Naive thymus-derived CD4-positive, alpha-beta T cell (primary cell): ENCODE measurements at regions of chr1 and their contacts with region 1.

Region 1: DNA sequence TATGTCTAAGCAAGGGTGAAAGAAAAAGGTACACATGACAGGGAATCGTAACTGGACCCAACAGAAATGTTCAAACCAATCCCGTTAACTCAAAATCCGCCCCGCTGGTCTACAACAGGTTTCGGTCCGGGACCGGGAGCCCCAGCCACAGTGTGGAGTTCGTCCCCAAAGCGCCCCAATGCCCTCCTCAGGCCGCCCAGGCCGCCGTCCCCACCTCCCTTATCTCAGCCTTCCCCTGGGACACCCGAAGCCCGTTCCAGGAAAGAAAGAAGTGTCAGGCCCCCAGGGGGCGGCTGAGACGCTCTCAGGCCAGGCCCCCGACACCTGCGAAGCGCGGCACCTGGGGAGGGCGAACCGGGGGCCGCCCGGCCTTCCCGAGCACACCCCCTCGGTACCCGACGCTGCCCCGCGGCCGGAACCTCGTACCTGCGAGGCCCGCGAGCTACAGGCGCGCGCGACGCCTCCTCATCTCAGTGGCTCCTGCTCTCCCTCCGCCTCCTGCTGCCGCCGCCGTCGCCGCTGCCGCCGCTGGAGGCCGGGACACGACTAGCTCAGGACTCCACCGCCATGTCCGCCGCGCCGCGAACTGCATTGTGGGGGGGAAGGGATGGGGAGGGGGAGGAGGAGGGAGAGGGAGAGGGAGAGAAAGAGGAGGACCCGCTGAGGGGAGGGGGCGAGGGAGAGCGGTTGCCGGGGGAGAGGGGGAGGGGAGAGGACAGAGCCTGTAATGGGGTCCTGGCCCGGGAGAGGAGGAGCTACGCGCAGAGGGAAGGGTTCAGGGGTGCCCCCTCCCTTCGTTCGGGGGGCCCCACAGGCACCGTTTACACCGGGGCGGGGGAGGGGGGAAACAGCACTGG is at the start of gene TUT4:
- DNase-seq: peak; percentile 57 to 77 (median 73)
- ATAC-seq: peak; percentile 57
- H3K4me3 ChIP-seq: peak within 1 kb of the TSS; percentile 95
- H3K4me3 Mint-ChIP-seq: peak within 1 kb of the TSS in 8 of 10 donors; percentile 67 to 88 (median 75)
- H3K27ac ChIP-seq: peak within 1 kb of the TSS; percentile 91
- H3K27ac Mint-ChIP-seq: peak within 1 kb of the TSS in 7 of 9 donors; percentile 55 to 94 (median 87)
- H3K4me1 ChIP-seq: peaks cover 0 to 40% of the 10 kb centered on the region in 2 donors
- H3K4me1 Mint-ChIP-seq: peaks cover 23 to 52% (median 43%) of the 10 kb centered on the region in 7 donors
- H3K27me3 ChIP-seq: no peaks in the 10 kb centered on the region
- H3K27me3 Mint-ChIP-seq: peaks cover 0 to 7% (median 0%) of the 10 kb centered on the region in 5 donors
- total RNA-seq, gene TUT4: 80.4 to 169 (median 139) TPM

Region 2: DNA sequence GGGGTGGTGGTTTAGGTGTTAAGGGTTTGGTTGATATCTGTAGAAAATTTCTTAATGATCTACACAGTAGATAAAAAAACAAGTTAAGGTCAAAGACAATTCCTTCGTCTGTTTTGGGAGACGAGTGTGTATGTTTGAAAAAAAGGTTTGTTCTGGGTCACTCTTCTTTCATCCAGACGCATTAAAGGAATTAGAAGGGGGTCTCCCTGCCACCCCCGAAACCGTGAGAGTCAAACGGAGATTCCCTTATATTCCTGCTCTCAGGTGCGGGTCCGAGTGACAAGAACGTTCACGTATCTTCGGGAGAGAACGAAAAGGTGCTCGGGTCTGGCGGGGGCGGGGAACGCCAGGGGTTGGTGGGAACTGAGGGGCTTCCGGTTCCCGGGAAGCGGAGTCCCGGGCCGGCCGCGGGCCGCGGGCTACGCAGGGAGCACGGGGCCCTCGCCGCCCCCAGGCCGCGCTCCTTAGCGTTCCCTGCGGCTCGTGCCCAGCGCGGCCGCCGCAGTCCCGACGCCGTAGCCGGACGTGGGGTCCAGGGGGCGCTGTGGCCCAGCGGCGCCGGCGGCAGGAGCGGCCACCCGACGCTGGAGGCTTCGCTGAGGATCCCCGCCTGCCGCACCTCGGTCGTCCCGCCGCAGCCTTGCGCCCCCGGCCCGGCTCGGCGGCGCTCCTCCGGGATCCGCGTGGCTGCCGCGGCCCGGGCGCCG is 411.1 kb before region 1 on chr1 and contains the start of gene ZFYVE9:
- CTCF ChIA-PET with region 1: no interaction called
- POLR2A ChIA-PET with region 1: no interaction called
- intact Hi-C with region 1: loop called in 1 of 2 experiments (anchors 5 kb)
- DNase-seq: peak; percentile 52 to 80 (median 73)
- ATAC-seq: peak; percentile 93
- H3K4me3 ChIP-seq: peak within 1 kb of the TSS; percentile 65
- H3K4me3 Mint-ChIP-seq: peak within 1 kb of the TSS; percentile 79 to 96 (median 92)
- H3K27ac ChIP-seq: peak within 1 kb of the TSS; percentile 72
- H3K27ac Mint-ChIP-seq: peak within 1 kb of the TSS; percentile 64 to 95 (median 86)
- H3K4me1 ChIP-seq: peaks cover 11 to 24% of the 10 kb centered on the region in 2 donors
- H3K4me1 Mint-ChIP-seq: peaks cover 26 to 48% (median 43%) of the 10 kb centered on the region in 7 donors
- H3K27me3 ChIP-seq: no peaks in the 10 kb centered on the region
- H3K27me3 Mint-ChIP-seq: peaks cover 0 to 44% (median 0%) of the 10 kb centered on the region in 5 donors
- total RNA-seq, gene ZFYVE9: 1.8 to 13.9 (median 7.6) TPM

Region 3: DNA sequence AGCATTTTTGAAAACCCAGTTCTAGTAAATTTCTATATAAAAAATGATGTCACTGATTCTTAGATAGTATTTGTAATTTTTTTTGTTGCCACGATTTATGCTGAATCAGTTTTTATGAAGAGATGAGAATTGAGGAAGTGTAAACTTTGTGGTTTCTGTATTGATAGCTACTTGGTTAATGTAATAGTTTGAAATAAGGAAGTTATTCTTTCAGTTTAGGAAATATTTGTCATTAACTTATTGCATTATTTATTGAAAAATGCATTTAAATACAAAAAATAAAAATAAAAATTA is 313.1 kb before region 1 on chr1:
- CTCF ChIA-PET with region 1: no interaction called
- POLR2A ChIA-PET with region 1: no interaction called
- intact Hi-C with region 1: no loop called
- DNase-seq: no peak
- ATAC-seq: peak; percentile 54
- H3K4me3 ChIP-seq: no peak overlapping the region
- H3K4me3 Mint-ChIP-seq: no peak overlapping the region
- H3K27ac ChIP-seq: no peak overlapping the region
- H3K27ac Mint-ChIP-seq: no peak overlapping the region
- H3K4me1 ChIP-seq: no peaks in the 10 kb centered on the region
- H3K4me1 Mint-ChIP-seq: peaks cover 0 to 17% (median 1%) of the 10 kb centered on the region in 7 donors
- H3K27me3 ChIP-seq: no peaks in the 10 kb centered on the region
- H3K27me3 Mint-ChIP-seq: peaks cover 0 to 21% (median 0%) of the 10 kb centered on the region in 5 donors

Region 4: GRCh38 chr1:52413410-52413989 is 139.2 kb before region 1 on chr1:
- CTCF ChIA-PET with region 1: no interaction called
- POLR2A ChIA-PET with region 1: no interaction called
- intact Hi-C with region 1: no loop called
- DNase-seq: no peak
- ATAC-seq: no peak
- H3K4me3 ChIP-seq: no peak overlapping the region
- H3K4me3 Mint-ChIP-seq: no peak overlapping the region
- H3K27ac ChIP-seq: no peak overlapping the region
- H3K27ac Mint-ChIP-seq: peak overlapping the region in 1 of 9 donors; percentile 25
- H3K4me1 ChIP-seq: peaks cover 0 to 5% of the 10 kb centered on the region in 2 donors
- H3K4me1 Mint-ChIP-seq: peaks cover 8 to 36% (median 24%) of the 10 kb centered on the region in 7 donors
- H3K27me3 ChIP-seq: no peaks in the 10 kb centered on the region
- H3K27me3 Mint-ChIP-seq: no peaks in the 10 kb centered on the region

Region 5: DNA sequence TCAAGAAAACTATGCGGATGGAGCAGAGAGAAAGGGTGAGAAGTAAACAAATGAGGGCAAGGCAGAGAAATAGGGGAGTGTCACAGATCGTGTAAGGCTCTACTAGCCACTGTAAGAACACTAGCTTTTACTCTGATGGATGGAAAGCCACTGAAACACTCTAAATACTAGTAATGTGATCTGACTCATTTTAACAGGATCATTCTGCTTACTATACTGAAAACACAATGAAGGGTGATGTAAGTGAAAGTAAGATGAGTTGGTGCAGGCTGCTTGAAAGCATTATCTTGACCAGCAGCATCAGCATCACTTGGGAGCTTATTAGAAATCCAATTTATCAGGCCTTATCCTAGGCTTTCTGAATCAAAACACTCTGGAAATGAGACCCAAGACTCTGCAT is 32.6 kb before region 1 on chr1:
- CTCF ChIA-PET with region 1: no interaction called
- POLR2A ChIA-PET with region 1: no interaction called
- intact Hi-C with region 1: loop called (anchors 1 to 5 kb)
- DNase-seq: no peak
- ATAC-seq: no peak
- H3K4me3 ChIP-seq: no peak overlapping the region
- H3K4me3 Mint-ChIP-seq: no peak overlapping the region
- H3K27ac ChIP-seq: no peak overlapping the region
- H3K27ac Mint-ChIP-seq: peak overlapping the region in 5 of 9 donors; percentile 5 to 63 (median 28)
- H3K4me1 ChIP-seq: peaks cover 4 to 9% of the 10 kb centered on the region in 2 donors
- H3K4me1 Mint-ChIP-seq: peaks cover 13 to 55% (median 45%) of the 10 kb centered on the region in 7 donors
- H3K27me3 ChIP-seq: no peaks in the 10 kb centered on the region
- H3K27me3 Mint-ChIP-seq: no peaks in the 10 kb centered on the region

Region 6: GRCh38 chr1:52601991-52602855 is 49.5 kb after region 1 on chr1 and contains the start of gene GPX7:
- CTCF ChIA-PET with region 1: no interaction called
- POLR2A ChIA-PET with region 1: interaction called, 11 read pairs
- intact Hi-C with region 1: loop called (anchors 1 kb)
- DNase-seq: peak; percentile 45 to 68 (median 62)
- ATAC-seq: peak; percentile 84
- H3K4me3 ChIP-seq: peak within 1 kb of the TSS; percentile 83
- H3K4me3 Mint-ChIP-seq: peak within 1 kb of the TSS; percentile 91 to 95 (median 92)
- H3K27ac ChIP-seq: peak within 1 kb of the TSS; percentile 82
- H3K27ac Mint-ChIP-seq: peak within 1 kb of the TSS; percentile 85 to 97 (median 95)
- H3K4me1 ChIP-seq: peaks cover 25 to 29% of the 10 kb centered on the region in 2 donors
- H3K4me1 Mint-ChIP-seq: peaks cover 38 to 57% (median 50%) of the 10 kb centered on the region in 7 donors
- H3K27me3 ChIP-seq: no peaks in the 10 kb centered on the region
- H3K27me3 Mint-ChIP-seq: no peaks in the 10 kb centered on the region
- total RNA-seq, gene GPX7: 14.8 to 32.8 (median 29.2) TPM

Region 7: GRCh38 chr1:52683367-52683940 is 130.7 kb after region 1 on chr1:
- CTCF ChIA-PET with region 1: no interaction called
- POLR2A ChIA-PET with region 1: interaction called, 5 read pairs
- intact Hi-C with region 1: loop called (anchors 1 kb)
- DNase-seq: no peak
- ATAC-seq: no peak
- H3K4me3 ChIP-seq: no peak overlapping the region
- H3K4me3 Mint-ChIP-seq: no peak overlapping the region
- H3K27ac ChIP-seq: no peak overlapping the region
- H3K27ac Mint-ChIP-seq: peak overlapping the region in 6 of 9 donors; percentile 8 to 68 (median 26)
- H3K4me1 ChIP-seq: peaks cover 4 to 6% of the 10 kb centered on the region in 2 donors
- H3K4me1 Mint-ChIP-seq: peaks cover 6 to 28% (median 13%) of the 10 kb centered on the region in 7 donors
- H3K27me3 ChIP-seq: no peaks in the 10 kb centered on the region
- H3K27me3 Mint-ChIP-seq: no peaks in the 10 kb centered on the region

Region 8: GRCh38 chr1:53196485-53197270 is 643.9 kb after region 1 on chr1 and contains the start of gene CPT2:
- CTCF ChIA-PET with region 1: no interaction called
- POLR2A ChIA-PET with region 1: no interaction called
- intact Hi-C with region 1: loop called in 1 of 2 experiments (anchors 2 kb)
- DNase-seq: peak; percentile 78 to 94 (median 89)
- ATAC-seq: peak; percentile 99
- H3K4me3 ChIP-seq: peak within 1 kb of the TSS; percentile 91
- H3K4me3 Mint-ChIP-seq: peak within 1 kb of the TSS; percentile 88 to 100 (median 98)
- H3K27ac ChIP-seq: peak within 1 kb of the TSS; percentile 98
- H3K27ac Mint-ChIP-seq: peak within 1 kb of the TSS; percentile 90 to 100 (median 97)
- H3K4me1 ChIP-seq: peaks cover 16 to 20% of the 10 kb centered on the region in 2 donors
- H3K4me1 Mint-ChIP-seq: peaks cover 13 to 48% (median 44%) of the 10 kb centered on the region in 7 donors
- H3K27me3 ChIP-seq: no peaks in the 10 kb centered on the region
- H3K27me3 Mint-ChIP-seq: no peaks in the 10 kb centered on the region
- total RNA-seq, gene CPT2: 8.8 to 23.0 (median 13.4) TPM

Region 9: DNA sequence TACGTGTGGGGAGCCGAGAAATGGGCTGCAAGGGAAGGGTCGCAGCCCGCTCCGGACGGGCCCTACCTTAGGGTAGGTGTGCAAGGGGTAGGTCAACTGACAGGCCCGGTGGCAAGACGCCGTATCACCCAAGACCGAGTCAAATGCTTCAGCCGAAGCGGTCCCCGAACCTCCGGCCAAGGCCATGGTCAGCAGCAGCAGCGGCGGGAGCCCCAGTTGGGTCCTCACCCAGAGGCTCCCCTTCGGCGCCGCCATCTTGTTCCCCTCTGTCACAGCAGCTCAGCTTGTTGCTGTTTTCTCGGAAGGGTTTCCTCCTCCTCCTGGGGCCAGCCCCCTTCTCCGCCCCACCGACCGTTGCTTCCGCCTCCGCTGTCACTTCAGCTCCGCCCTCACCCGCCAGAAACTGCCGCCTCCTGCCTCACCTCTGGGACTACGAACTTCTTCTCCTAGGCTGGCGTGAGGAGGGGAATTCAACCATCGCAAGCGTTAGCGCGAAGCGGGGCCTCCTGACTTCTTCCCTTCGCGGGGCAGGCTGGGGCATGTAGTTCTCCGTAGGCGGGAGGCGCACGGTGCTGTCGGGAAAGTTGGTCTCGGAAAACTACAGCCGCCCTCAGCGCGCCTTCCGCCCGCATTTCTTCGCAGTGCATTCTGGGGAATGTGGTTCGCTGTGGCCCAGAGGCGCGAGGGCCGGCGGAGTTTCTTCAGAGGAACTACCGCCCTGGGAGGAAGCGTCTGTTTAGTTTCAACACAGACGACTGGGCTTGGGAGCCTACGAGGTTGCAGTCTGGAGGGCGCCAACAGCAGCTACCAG is 1500.4 kb after region 1 on chr1 and contains the starts of genes TCEANC2 and TMEM59:
- CTCF ChIA-PET with region 1: no interaction called
- POLR2A ChIA-PET with region 1: no interaction called
- intact Hi-C with region 1: loop called in 1 of 2 experiments (anchors 5 kb)
- DNase-seq: peak; percentile 84 to 99 (median 98)
- ATAC-seq: peak; percentile 94
- H3K4me3 ChIP-seq: peak within 1 kb of the TSS; percentile 94
- H3K4me3 Mint-ChIP-seq: no peak within 1 kb of the TSS
- H3K27ac ChIP-seq: peak within 1 kb of the TSS; percentile 92
- H3K27ac Mint-ChIP-seq: no peak within 1 kb of the TSS
- H3K4me1 ChIP-seq: peaks cover 23 to 34% of the 10 kb centered on the region in 2 donors
- H3K4me1 Mint-ChIP-seq: peaks cover 27 to 62% (median 52%) of the 10 kb centered on the region in 7 donors
- H3K27me3 ChIP-seq: no peaks in the 10 kb centered on the region
- H3K27me3 Mint-ChIP-seq: no peaks in the 10 kb centered on the region
- total RNA-seq, gene TCEANC2: 6.3 to 15.1 (median 12.2) TPM
- total RNA-seq, gene TMEM59: 127 to 197 (median 183) TPM